Naive thymus-derived CD4-positive, alpha-beta T cell (primary cell): ENCODE measurements at regions of chr6 and their contacts with region 1.

Region 1: DNA sequence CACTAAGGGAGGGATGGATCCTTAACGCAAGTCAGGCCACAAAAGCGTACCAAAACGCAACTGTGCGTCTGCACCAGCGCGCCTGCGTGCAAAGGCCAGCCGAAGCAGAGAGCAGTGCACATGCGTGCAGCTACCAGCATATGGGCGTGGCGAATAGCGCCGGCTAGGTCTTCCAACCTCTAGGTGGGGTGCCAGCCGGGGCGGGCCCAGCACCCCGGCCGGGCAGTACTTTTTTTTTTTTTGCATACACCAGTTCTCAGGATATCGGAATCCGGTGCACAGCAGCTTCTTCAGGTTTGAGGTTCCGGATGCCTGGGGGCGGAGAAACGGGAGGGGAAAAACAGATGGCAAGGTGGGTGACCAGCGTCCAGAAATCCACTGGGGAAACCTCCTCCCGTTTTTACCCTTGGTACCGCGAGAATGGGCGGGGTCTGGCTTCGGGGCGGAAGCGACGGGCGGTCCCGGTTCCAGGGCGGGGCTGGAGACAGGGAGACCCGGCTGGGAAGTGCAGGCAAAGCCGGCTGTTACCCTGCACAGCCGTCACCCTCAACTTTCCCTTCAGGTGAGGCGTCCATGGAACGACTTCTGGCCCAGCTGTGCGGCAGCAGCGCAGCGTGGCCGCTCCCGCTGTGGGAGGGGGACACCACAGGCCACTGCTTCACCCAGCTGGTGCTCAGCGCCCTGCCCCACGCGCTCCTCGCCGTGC is at the start of gene ABCC10:
- DNase-seq: peak; percentile 89 to 98 (median 95)
- ATAC-seq: peak; percentile 97
- H3K4me3 ChIP-seq: peak within 1 kb of the TSS; percentile 77
- H3K4me3 Mint-ChIP-seq: peak within 1 kb of the TSS; percentile 89 to 98 (median 94)
- H3K27ac ChIP-seq: peak within 1 kb of the TSS; percentile 95
- H3K27ac Mint-ChIP-seq: peak within 1 kb of the TSS; percentile 93 to 100 (median 98)
- H3K4me1 ChIP-seq: peaks cover 11 to 12% of the 10 kb centered on the region in 2 donors
- H3K4me1 Mint-ChIP-seq: peaks cover 15 to 36% (median 27%) of the 10 kb centered on the region in 7 donors
- H3K27me3 ChIP-seq: no peaks in the 10 kb centered on the region
- H3K27me3 Mint-ChIP-seq: peaks cover 0 to under 1% (median 0%) of the 10 kb centered on the region in 5 donors
- total RNA-seq, gene ABCC10: 56.2 to 74.6 (median 60.4) TPM

Region 2: DNA sequence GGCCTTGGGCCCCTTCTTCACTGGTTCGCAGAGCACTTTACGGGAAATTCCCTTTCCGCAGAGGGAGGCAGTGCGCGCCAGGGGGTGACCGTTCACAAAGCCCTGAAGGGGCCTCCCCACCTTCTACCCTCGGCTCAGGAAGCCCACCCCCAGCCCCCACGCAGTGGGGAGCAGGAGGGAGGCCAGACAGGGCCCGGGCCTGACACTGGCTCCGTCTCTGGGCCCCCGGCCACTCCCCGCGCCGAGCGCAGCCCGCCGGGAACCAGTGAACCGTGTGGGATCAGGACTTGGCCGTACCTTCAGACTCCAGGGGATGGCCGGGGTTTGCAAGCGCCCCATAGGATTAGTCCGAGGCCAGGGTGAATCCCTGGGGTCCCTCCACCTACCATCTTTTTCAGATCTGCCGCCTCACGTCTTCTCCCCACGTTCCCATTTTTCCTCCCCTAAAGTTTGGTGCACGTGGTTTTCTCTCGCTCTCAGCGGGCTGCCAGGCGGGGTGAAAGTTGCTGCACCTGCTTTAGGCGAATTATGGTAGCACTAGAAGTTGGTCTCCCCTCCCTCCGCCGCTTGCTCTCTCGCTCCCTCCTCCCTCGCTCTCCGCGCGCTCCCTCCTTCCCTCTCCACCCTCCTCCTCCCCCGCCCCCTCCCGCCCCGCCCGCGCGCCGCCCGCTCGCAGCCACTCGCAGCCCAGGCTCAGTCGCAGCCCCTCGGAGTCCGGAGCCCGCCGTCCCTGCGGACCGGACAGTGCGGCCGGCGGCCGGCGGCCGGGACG is 1881.7 kb before region 1 on chr6 and contains the start of gene FOXP4:
- CTCF ChIA-PET with region 1: no interaction called
- POLR2A ChIA-PET with region 1: no interaction called
- intact Hi-C with region 1: loop called in 1 of 2 experiments (anchors 5 kb)
- DNase-seq: peak; percentile 45 to 83 (median 76)
- ATAC-seq: peak; percentile 95
- H3K4me3 ChIP-seq: peak within 1 kb of the TSS; percentile 64
- H3K4me3 Mint-ChIP-seq: peak within 1 kb of the TSS; percentile 91 to 96 (median 94)
- H3K27ac ChIP-seq: peak within 1 kb of the TSS; percentile 19
- H3K27ac Mint-ChIP-seq: peak within 1 kb of the TSS in 8 of 9 donors; percentile 7 to 86 (median 66)
- H3K4me1 ChIP-seq: peaks cover 20 to 27% of the 10 kb centered on the region in 2 donors
- H3K4me1 Mint-ChIP-seq: peaks cover 6 to 42% (median 25%) of the 10 kb centered on the region in 7 donors
- H3K27me3 ChIP-seq: peaks cover 2 to 9% of the 10 kb centered on the region in 2 donors
- H3K27me3 Mint-ChIP-seq: peaks cover 10 to 73% (median 16%) of the 10 kb centered on the region in 5 donors
- total RNA-seq, gene FOXP4: 3.1 to 7.6 (median 4.9) TPM

Region 3: DNA sequence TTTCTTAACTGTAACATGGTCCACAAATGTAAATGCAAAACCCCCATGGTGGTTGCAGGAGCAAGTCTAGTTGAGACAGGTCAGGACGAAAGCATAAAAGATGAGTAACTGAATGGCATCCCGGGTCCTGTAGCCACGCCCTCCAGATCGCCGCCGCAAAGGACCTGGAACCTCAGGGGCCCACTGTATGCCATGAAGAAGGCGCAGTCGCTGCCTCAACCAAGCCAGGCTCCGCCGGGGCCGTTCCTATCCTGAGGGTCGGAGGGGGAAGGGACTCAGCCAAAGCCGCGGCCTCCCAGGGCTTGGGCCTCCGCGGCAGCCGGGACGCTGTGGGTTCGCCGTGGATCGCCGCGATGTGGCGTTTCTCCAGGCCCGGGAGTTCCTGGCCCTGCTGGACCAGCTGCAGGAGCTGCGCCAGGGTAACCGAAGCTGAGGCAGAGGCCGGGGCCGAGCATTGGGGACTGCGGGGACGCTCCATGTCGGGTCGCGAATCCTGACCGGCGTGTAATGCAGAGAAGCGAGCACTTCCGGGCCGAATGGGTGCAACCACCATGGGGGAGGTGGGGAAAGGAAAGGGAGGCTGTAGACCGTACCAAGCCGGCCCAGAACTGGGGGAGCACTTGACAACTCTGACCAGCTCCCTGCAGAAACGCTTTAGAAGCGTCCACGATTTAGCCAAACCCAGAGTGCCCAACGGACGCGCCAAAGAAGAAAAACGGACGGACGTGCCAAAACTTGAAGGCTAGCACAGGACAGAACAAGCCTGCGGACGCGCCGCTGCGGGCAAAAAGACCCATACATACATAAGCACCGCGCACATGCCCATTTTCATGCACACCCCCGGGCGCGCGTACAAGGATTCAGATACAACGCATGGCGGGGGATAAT is 537.0 kb before region 1 on chr6:
- CTCF ChIA-PET with region 1: no interaction called
- POLR2A ChIA-PET with region 1: no interaction called
- intact Hi-C with region 1: loop called in 1 of 2 experiments (anchors 1 kb)
- DNase-seq: peak; percentile 70 to 90 (median 87)
- ATAC-seq: peak; percentile 99
- H3K4me3 ChIP-seq: peak overlapping the region; percentile 89
- H3K4me3 Mint-ChIP-seq: peak overlapping the region; percentile 94 to 100 (median 98)
- H3K27ac ChIP-seq: peak overlapping the region; percentile 87
- H3K27ac Mint-ChIP-seq: peak overlapping the region; percentile 89 to 99 (median 98)
- H3K4me1 ChIP-seq: peaks cover 0 to 8% of the 10 kb centered on the region in 2 donors
- H3K4me1 Mint-ChIP-seq: peaks cover 0 to 26% (median 14%) of the 10 kb centered on the region in 7 donors
- H3K27me3 ChIP-seq: no peaks in the 10 kb centered on the region
- H3K27me3 Mint-ChIP-seq: no peaks in the 10 kb centered on the region

Region 4: GRCh38 chr6:43059168-43060033 is 368.2 kb before region 1 on chr6 and contains the starts of genes KLC4 and MRPL2:
- CTCF ChIA-PET with region 1: no interaction called
- POLR2A ChIA-PET with region 1: no interaction called
- intact Hi-C with region 1: loop called in 1 of 2 experiments (anchors 1 kb)
- DNase-seq: peak; percentile 79 to 98 (median 95)
- ATAC-seq: peak; percentile 99
- H3K4me3 ChIP-seq: peak within 1 kb of the TSS; percentile 80
- H3K4me3 Mint-ChIP-seq: peak within 1 kb of the TSS; percentile 88 to 100 (median 96)
- H3K27ac ChIP-seq: peak within 1 kb of the TSS; percentile 88
- H3K27ac Mint-ChIP-seq: peak within 1 kb of the TSS; percentile 95 to 100 (median 99)
- H3K4me1 ChIP-seq: peaks cover 0 to 21% of the 10 kb centered on the region in 2 donors
- H3K4me1 Mint-ChIP-seq: peaks cover 28 to 50% (median 45%) of the 10 kb centered on the region in 7 donors
- H3K27me3 ChIP-seq: no peaks in the 10 kb centered on the region
- H3K27me3 Mint-ChIP-seq: no peaks in the 10 kb centered on the region
- total RNA-seq, gene KLC4: 16.5 to 56.9 (median 42.5) TPM
- total RNA-seq, gene MRPL2: 32.0 to 57.5 (median 47.7) TPM

Region 5: GRCh38 chr6:43369174-43370022 is 58.2 kb before region 1 on chr6 and contains the start of gene ZNF318:
- CTCF ChIA-PET with region 1: no interaction called
- POLR2A ChIA-PET with region 1: interaction called, 7 read pairs
- intact Hi-C with region 1: loop called (anchors 1 kb)
- DNase-seq: peak; percentile 85 to 95 (median 93)
- ATAC-seq: peak; percentile 97
- H3K4me3 ChIP-seq: peak within 1 kb of the TSS; percentile 90
- H3K4me3 Mint-ChIP-seq: peak within 1 kb of the TSS; percentile 75 to 97 (median 92)
- H3K27ac ChIP-seq: peak within 1 kb of the TSS; percentile 87
- H3K27ac Mint-ChIP-seq: peak within 1 kb of the TSS; percentile 91 to 98 (median 95)
- H3K4me1 ChIP-seq: peaks cover 20 to 23% of the 10 kb centered on the region in 2 donors
- H3K4me1 Mint-ChIP-seq: peaks cover 28 to 56% (median 50%) of the 10 kb centered on the region in 7 donors
- H3K27me3 ChIP-seq: no peaks in the 10 kb centered on the region
- H3K27me3 Mint-ChIP-seq: peaks cover 0 to 17% (median 0%) of the 10 kb centered on the region in 5 donors
- total RNA-seq, gene ZNF318: 15.8 to 40.2 (median 28.3) TPM

Region 6: DNA sequence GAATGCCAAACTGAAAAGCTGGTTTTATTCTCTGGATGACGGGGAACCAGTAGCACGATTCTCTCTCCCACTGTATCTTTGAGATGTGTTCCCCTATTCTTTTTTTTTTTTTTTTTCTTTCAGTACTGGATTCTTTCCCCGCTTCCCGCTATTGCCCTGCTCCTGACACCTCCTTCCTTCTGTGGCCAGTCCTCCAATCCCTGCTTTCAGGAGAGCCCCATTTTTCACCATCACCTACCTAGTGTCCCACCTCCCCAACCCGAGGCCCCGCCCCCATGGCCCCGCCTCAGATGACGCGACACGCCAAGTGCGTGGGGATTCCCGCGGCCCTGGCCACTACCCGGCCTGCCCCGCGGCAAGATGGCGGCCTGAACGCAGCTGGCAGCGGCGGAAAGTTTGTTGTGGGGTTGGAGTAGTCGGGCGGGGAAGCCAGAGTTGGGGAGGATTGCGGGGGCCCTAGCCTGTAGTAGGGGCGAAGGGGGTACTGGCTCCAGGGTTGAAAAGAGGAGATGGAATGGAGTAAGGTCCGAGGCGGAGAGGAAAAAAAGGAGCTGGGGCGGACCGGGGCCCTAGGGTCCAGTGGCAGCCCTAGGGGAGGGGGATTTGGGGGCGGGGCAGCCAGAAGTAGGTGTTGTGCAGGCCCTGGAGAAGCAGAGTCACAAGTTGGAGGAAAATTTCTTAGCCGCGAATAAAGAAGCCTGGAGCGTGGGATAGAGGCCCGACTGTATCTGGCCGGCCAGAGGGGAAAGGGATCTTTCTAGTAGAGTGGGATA is 49.9 kb after region 1 on chr6 and contains the start of gene TJAP1:
- CTCF ChIA-PET with region 1: no interaction called
- POLR2A ChIA-PET with region 1: interaction called, 6 read pairs
- intact Hi-C with region 1: loop called (anchors 1 kb)
- DNase-seq: peak; percentile 89 to 99 (median 95)
- ATAC-seq: peak; percentile 100
- H3K4me3 ChIP-seq: peak within 1 kb of the TSS; percentile 83
- H3K4me3 Mint-ChIP-seq: peak within 1 kb of the TSS; percentile 87 to 99 (median 93)
- H3K27ac ChIP-seq: peak within 1 kb of the TSS; percentile 96
- H3K27ac Mint-ChIP-seq: peak within 1 kb of the TSS; percentile 90 to 98 (median 96)
- H3K4me1 ChIP-seq: peaks cover 10 to 16% of the 10 kb centered on the region in 2 donors
- H3K4me1 Mint-ChIP-seq: peaks cover 37 to 54% (median 51%) of the 10 kb centered on the region in 7 donors
- H3K27me3 ChIP-seq: no peaks in the 10 kb centered on the region
- H3K27me3 Mint-ChIP-seq: no peaks in the 10 kb centered on the region
- total RNA-seq, gene TJAP1: 29.2 to 55.2 (median 33.5) TPM